ENCODE measurements at regions of chr10 and their contacts with region 1.

Region 1: GRCh38 chr10:79374312-79375191 is 27.3 kb downstream of the PPIF start:
- DNase-seq: no peak
- H3K4me3 ChIP-seq: no peak overlapping the region
- CTCF ChIP-seq: peak; percentile 94

Region 2: DNA sequence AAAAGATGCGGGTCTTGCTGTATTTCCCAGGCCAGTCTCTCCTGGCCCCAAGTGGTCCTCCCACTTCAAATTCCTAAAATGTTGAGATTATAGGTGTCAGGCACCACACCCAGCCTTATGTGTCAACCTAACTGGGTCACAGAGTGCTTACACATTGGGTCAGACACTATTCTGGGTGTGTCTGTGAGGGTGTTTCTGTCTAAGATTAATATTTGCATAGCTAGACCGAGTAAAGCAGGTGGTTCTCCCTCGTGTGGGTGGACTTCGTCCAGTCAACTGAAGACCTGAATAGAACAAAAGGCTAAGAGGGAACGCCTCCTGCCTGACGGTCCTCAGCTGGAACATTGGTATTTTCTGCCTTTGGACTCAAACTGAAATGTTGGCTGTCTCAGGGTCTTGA is 15.8 kb before region 1 on chr10:
- CTCF ChIA-PET with region 1: interaction called, 30 read pairs
- POLR2A ChIA-PET with region 1: no interaction called
- DNase-seq: no peak
- H3K4me3 ChIP-seq: no peak overlapping the region
- CTCF ChIP-seq: no peak

Region 3: DNA sequence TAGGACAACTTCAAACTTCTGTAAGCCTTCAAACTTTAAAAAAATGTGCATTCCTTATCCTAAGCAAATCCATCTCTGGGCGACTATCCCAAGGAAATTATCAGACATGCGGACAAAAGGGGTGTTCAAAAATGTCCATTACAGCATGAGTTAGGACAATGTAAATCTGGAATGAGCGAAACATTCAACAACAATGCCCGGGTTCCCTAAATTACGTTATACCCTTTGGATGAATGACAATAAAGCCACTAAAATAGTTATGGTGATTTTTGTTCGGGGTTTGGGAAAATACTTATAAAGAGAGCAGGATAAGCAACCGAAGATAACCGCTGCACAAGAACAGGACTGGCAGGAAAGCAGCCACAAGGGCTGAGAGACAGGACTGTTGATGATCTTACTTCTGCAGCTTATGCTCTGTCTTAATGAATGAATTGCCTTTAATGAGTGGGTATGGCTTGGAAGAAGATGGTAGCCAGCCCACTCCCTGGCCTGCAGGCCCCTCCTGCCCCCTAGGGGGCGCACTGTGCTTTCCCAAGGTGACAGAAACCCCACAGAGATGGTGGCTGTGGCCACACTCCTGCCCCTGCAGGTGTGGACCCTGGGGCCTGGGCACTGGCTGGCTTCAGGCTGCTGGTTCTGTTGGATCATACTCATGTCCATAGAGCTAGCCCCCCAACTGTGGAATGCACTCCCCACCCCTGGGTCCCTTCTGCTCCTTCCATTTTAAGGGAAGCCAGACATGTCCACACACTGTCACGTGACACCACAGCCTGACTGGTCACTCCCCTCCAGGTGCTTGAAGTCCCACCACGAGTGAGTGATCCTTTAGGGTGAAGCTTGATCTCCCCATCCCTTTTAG is 25.8 kb after region 1 on chr10:
- CTCF ChIA-PET with region 1: interaction called, 42 read pairs
- POLR2A ChIA-PET with region 1: no interaction called
- DNase-seq: no peak
- H3K4me3 ChIP-seq: no peak overlapping the region
- CTCF ChIP-seq: peak; percentile 70

Region 4: GRCh38 chr10:79487296-79488194 is 113.0 kb after region 1 on chr10:
- CTCF ChIA-PET with region 1: interaction called, 68 read pairs
- POLR2A ChIA-PET with region 1: no interaction called
- DNase-seq: no peak
- H3K4me3 ChIP-seq: no peak overlapping the region
- CTCF ChIP-seq: peak; percentile 70